ENCODE measurements at regions of chr2 and their contacts with region 1.

Region 1: DNA sequence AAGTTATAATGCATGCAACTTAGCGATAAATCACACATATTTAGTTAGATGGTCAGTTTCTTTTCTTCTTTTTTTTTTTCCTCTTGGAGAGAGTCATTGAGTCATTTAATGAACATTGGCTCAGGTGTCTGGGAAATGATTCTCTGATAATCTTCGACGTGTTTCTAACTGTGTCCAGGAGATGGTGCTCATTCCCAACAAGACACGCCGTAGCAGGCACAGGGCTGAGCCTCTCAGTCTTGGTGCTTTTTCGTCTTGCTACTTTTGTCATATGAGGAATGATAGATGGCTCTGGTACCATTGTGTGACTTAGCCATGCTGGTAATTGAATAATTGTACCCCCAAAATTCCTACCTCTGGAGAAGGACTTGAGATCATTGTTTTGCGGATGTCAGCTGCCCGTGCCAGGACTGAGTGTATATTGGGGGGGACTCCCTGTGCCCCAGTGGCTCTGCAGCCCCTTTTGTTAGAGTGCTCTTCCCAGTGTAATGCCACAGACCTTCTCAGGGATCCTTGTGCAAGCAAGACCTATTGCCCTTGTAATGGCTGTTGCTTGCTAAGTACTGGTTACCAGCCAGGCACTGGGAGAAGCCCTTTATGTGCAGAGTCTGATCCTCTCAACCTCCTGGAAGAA is 107.6 kb upstream of the CYRIA start:
- DNase-seq: peak; percentile 47
- ATAC-seq: peak; percentile 71
- H3K4me3 ChIP-seq: no peak overlapping the region
- H3K4me3 Mint-ChIP-seq: no peak overlapping the region
- H3K27ac ChIP-seq: no peak overlapping the region
- H3K27ac Mint-ChIP-seq: no peak overlapping the region
- H3K4me1 ChIP-seq: no peaks in the 10 kb centered on the region
- H3K4me1 Mint-ChIP-seq: peaks cover 2% of the 10 kb centered on the region
- H3K27me3 ChIP-seq: peaks cover 0 to 4% (median under 1%) of the 10 kb centered on the region in 4 experiments
- H3K27me3 Mint-ChIP-seq: peaks cover 19% of the 10 kb centered on the region
- CTCF ChIP-seq: peak; percentile 81

Region 2: DNA sequence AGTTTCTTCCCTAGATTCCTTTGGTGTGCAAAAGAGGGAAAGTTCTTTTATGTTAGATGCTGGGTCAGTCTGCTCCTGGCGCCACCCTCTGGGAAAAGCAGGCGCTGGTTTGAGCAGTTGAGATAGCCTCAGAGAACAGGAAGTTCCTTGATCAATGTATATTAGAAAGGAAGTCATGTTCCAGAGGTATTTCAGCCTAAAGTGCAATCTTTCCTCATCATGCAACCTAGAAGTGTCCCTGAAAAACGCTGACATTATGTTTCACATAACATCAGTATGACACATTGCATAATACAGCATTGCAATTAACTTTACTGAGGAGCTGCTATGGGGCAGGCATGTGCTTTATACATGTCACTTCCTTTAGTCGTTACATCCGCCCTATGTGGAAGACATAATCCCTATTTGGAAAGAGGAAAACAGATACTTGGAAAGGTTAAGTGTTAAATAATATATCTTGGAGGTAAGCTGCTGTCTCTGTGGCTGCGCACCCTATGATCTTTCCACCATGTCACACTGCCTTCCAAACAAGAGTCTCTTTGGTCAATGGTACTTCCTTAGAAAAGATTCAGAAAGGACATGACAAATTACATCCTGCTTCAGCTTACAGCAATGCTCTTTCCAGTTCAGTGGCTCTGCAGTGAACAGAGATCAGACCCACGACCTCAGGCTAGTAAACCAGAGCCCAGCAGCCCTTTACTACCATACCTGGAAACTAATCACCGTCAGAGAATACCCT is 375.4 kb after region 1 on chr2:
- CTCF ChIA-PET with region 1: interaction called, 7 read pairs
- POLR2A ChIA-PET with region 1: no interaction called
- intact Hi-C with region 1: loop called (anchors 2 kb)
- DNase-seq: no peak
- ATAC-seq: no peak
- H3K4me3 ChIP-seq: no peak overlapping the region
- H3K4me3 Mint-ChIP-seq: no peak overlapping the region
- H3K27ac ChIP-seq: no peak overlapping the region
- H3K27ac Mint-ChIP-seq: peak overlapping the region; percentile 11
- H3K4me1 ChIP-seq: peaks cover 8 to 12% of the 10 kb centered on the region in 2 donors
- H3K4me1 Mint-ChIP-seq: peaks cover 29% of the 10 kb centered on the region
- H3K27me3 ChIP-seq: no peaks in the 10 kb centered on the region
- H3K27me3 Mint-ChIP-seq: no peaks in the 10 kb centered on the region
- CTCF ChIP-seq: no peak

Region 3: DNA sequence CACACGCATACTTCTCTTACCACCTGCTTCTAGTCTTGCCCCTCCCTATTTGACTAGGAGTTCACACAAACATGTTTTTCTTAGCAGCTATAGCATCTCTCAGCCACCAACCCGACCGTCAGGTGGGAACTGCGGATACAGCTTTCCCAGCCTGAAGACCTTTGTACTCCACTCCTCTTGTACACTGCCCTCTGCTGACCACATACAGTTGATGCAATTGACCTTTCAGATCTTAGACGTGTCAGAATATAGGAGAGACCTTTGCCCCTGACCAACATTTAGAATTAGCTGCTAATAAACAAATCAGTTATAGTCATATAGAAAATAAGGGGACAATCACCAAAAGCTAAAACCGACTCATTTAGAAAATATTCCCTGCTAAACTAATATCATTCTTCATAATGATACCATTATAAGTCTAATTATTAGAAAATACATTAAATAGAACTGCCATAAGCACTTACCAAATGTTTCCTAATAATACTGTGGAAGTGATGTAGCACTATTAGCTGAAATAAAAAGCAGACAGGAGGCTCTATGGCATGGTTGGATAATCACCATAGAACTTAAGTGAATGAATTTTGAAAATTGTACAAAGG is 536.6 kb after region 1 on chr2:
- CTCF ChIA-PET with region 1: interaction called, 222 read pairs
- POLR2A ChIA-PET with region 1: no interaction called
- intact Hi-C with region 1: no loop called
- DNase-seq: peak; percentile 58
- ATAC-seq: peak; percentile 76
- H3K4me3 ChIP-seq: no peak overlapping the region
- H3K4me3 Mint-ChIP-seq: no peak overlapping the region
- H3K27ac ChIP-seq: no peak overlapping the region
- H3K27ac Mint-ChIP-seq: no peak overlapping the region
- H3K4me1 ChIP-seq: no peaks in the 10 kb centered on the region
- H3K4me1 Mint-ChIP-seq: peaks cover 7% of the 10 kb centered on the region
- H3K27me3 ChIP-seq: no peaks in the 10 kb centered on the region
- H3K27me3 Mint-ChIP-seq: no peaks in the 10 kb centered on the region
- CTCF ChIP-seq: peak; percentile 77

Region 4: DNA sequence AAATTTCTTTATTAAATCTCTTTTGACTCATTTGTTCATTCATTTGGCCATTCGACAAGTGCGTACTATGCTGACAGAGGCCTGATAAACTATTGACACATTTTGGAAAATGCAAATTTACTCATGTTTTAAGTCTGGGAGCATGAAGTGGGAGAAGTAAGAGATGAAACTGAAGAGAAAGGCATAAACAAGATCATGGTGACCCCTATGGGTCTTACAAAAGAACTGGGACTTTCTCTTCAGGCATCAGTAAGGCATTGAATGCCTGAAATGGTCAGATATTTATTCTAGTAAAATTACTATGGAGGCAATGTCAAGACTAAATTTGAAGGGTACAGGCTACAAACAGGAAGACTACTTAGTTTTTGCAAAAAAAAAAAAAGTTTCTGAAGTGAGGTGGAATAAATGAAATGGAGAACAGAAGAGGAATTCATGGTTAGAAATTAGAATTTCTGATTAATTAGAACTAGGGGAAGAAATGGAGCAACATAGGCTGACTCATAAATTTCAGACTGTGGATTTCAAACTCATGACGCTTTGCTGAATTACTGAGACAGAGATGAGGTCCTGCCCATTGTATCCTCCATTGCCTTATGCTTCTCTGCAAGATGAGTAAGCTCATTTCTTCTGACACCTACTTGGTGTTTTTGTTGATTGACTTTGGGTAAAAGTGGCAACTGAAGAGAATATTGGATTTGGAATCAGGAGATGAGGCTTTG is 800.0 kb after region 1 on chr2:
- CTCF ChIA-PET with region 1: no interaction called
- POLR2A ChIA-PET with region 1: no interaction called
- intact Hi-C with region 1: loop called (anchors 5 kb)
- DNase-seq: no peak
- ATAC-seq: no peak
- H3K4me3 ChIP-seq: no peak overlapping the region
- H3K4me3 Mint-ChIP-seq: no peak overlapping the region
- H3K27ac ChIP-seq: no peak overlapping the region
- H3K27ac Mint-ChIP-seq: no peak overlapping the region
- H3K4me1 ChIP-seq: no peaks in the 10 kb centered on the region
- H3K4me1 Mint-ChIP-seq: no peaks in the 10 kb centered on the region
- H3K27me3 ChIP-seq: no peaks in the 10 kb centered on the region
- H3K27me3 Mint-ChIP-seq: peaks cover 34% of the 10 kb centered on the region
- CTCF ChIP-seq: no peak

Measured in B cell (primary cell).